ENCODE measurements at regions of chr5 and their contacts with region 1.

Region 1: DNA sequence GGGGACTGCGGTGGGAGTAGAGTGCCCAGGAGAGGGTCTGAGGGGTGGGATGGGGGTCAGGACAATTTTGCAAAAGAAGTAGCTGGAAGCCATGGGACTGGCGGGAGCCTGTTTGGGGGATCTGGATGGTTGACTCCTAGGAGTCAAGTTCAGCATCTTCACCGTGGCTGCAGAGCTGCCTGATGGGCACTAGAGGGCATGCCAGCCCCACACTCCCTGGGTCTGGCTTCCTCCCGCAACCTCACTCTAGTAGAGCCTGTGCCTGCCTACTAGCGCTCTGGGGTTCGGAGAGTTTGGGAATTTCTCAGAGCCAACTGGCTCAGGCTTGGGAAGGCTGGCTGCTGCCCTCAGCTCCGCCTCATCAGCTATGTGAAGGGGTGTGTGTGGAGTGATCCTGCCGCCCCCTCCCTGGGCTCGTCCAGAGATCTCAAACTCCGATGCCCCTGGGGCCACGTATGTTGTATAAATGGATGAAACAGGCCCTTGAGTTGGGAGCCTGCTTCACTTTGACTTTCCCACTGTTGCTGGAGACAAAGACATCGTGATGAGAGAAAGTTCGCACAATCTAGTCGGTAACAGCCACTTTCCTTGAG is 10.8 kb downstream of the TSPAN17 start:
- DNase-seq: peak; percentile 56 to 87 (median 81)
- H3K4me3 ChIP-seq: no peak overlapping the region
- H3K27ac ChIP-seq: peak overlapping the region in 37 of 59 donors; percentile 7 to 92 (median 64)
- H3K27me3 ChIP-seq: no peaks in the 10 kb centered on the region
- CTCF ChIP-seq: peak; percentile 50 to 92 (median 85)

Region 2: DNA sequence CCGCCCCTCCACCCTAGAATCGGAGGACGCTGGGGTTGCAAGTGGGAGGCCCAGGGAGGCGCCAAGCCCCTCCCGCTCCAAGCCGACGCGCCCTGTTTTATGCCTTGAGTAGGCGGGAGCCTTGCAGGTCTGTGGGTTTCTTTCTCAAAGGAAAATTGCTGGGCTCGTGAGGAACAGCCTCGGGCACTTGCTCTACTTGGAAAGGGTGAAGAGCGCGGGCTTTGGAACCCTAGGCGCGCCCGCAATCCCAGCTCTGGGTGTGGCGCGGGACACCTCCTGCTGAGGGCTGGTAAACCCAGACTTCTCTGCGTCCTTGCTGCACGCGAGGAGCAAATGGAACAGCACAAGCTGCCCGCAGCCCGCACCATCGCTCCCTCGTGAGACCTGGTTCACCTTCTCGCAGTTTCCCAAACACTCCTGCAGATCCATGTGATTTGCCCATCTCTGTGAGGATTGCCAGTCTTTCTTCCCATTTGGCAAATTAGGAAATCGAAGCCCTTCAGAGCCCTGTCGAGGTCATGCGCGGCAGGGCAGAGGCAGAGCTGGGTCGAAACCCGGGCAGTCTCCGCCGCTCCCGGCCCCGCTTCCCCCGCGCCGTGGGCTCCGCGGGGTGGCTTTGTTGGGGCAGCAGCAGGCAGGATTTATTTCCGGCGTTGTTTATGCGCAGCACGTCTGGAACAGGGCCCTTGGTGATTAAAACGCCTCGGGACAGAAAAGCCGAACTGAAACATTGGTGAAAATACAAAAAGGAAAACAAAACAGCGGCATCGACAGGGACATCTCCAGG is 885.2 kb before region 1 on chr5:
- intact Hi-C with region 1: no loop called
- DNase-seq: peak in 1 of 10 donors; percentile 40
- H3K4me3 ChIP-seq: peak overlapping the region in 55 of 59 donors; percentile 10 to 56 (median 39)
- H3K27ac ChIP-seq: peak overlapping the region in 2 of 59 donors; percentile 27 to 54
- H3K27me3 ChIP-seq: peaks cover 0 to 33% (median 3%) of the 10 kb centered on the region in 45 donors
- CTCF ChIP-seq: no peak

Region 3: DNA sequence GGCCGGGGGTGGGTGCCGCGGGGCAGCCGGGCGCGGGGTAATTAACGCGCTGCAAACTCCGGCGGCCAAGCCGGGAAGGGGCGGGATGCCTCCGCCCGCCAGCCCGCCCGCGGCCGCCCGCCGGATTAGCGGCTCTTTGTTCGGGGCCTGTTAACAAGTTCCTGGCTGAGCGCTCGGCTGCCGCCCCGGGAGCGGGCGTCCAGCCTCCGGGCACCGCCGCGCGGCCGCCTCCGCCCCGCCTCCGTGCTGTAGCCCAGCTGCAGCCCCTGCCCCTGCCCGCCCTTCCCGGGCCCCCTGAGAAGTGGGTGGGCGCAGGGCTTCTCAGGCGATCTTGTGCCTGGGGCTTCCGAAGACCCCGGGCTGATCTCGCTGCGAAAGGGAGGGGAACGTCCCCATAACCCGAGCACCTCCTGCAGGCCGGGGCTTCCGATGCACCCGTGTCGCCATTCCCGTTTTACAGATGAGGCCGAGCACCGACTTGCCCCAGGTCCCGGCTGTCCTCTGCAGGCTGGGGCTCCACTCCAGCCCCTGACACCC is 159.8 kb after region 1 on chr5:
- intact Hi-C with region 1: loop called in 1 of 2 experiments (anchors 10 kb)
- DNase-seq: peak in 3 of 10 donors; percentile 42 to 55 (median 45)
- H3K4me3 ChIP-seq: peak overlapping the region; percentile 24 to 71 (median 49)
- H3K27ac ChIP-seq: peak overlapping the region in 19 of 59 donors; percentile 7 to 71 (median 35)
- H3K27me3 ChIP-seq: peaks cover 0 to 33% (median 5%) of the 10 kb centered on the region in 45 donors
- CTCF ChIP-seq: peak in 1 of 56 donors; percentile 9

Region 4: DNA sequence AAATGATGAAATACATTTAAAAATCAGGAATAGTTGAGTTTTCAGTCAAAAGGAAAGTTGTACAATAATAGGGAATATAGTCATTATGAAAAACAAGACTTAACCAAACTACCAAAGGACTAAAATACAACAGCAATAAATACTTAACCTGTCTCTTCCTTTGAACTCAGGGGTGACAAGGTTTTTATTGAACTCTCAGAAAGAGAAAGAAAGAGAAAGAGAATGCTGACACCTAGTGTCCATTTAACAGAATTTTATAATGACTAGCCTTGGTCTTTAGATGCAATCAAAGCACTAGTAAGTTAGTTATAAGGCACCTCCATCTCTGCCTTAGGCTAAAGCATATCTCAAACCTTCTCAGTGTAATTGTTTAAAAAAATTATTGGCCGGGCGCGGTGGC is 300.9 kb after region 1 on chr5:
- intact Hi-C with region 1: loop called (anchors 2 to 10 kb)
- DNase-seq: no peak
- H3K4me3 ChIP-seq: no peak overlapping the region
- H3K27ac ChIP-seq: no peak overlapping the region
- H3K27me3 ChIP-seq: no peaks in the 10 kb centered on the region
- CTCF ChIP-seq: peak; percentile 15 to 77 (median 58)

Region 5: DNA sequence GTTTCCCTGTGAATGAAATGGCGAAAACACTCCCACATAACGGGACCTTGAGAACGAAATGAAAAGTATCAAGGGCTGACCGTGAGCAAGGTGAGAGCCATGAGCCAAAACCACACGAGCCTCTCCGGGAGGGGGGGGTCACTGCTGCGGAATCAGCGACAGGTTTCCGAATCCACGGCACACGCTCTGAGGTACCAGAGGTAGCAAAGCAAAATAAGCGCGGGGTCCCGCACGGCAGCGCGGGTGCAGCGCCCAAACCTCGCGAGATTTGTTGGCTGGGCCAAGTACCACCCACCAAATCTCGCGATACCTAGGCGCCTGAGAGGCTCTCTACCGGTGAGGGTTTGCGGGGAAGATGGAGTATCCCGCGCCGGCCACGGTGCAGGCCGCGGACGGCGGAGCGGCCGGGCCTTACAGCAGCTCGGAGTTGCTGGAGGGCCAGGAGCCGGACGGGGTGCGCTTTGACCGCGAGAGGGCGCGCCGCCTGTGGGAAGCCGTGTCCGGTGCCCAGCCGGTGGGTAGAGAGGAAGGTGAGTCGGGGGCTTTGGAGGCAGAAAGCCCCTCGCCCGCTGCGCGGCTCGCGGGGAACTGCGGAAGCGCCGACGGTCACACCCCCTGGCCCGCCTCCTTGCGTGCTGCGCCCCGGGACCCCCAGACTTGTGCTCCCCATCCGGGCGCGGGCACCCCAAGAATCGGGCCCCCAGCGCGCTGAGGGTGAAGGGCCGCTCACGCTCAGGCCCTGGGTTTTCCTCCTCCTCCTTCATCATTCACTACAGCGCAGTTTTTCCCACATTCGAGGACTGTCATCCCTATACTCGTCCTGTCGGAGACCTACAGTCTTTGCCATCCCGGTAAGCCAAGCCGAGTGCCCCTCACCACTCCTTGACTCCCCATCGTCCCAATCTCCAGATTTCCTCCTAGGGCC is 364.5 kb after region 1 on chr5 and contains the start of gene ZNF346:
- intact Hi-C with region 1: loop called in 1 of 2 experiments (anchors 5 kb)
- DNase-seq: peak; percentile 71 to 95 (median 89)
- H3K4me3 ChIP-seq: peak within 1 kb of the TSS; percentile 63 to 100 (median 88)
- H3K27ac ChIP-seq: peak within 1 kb of the TSS; percentile 24 to 95 (median 86)
- H3K27me3 ChIP-seq: no peaks in the 10 kb centered on the region
- CTCF ChIP-seq: peak in 54 of 56 donors; percentile 39 to 85 (median 60)
- total RNA-seq, gene ZNF346: 28.1 to 67.6 (median 44.9) TPM

Region 6: DNA sequence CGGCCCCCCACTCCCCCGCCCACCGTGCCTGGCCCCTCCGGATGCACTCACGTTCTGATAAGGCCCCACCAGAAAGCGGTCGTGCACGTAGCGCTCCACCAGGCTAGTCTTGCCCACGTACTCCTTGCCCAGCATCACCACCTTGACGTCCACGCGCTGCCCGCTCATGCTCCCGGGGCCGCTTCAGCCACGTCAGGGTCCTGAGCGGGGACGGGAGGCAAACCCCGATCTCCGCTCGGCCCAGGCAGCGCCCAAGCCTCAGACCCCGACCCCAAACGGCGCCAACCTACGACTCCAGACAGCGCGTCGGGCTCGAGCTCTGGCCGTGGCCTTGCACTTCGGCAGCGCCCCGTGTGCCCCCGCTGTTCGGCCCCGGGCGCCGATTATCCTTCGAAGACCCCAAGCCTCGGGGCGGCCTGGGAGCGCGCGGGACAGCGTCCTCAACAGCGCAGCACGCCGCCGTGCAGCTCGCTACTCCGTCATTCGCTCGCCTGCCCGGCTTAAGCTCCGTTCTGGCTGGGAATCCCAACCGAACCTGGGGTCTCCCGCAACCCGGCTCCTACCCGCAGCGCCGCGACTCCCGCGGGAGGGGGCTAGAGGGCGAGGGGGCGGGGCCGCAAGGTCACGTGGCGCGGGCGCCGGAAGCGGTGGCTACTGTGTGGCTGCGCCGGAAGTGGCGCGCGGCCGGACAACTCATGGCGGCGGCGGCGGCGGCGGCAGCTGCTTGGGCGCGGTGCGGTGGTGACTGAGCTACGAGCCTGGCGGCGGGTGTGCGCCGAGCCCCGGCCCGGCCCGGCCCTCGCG is 645.2 kb after region 1 on chr5 and contains the starts of genes PRELID1 and RAB24:
- intact Hi-C with region 1: loop called in 1 of 2 experiments (anchors 10 kb)
- DNase-seq: peak; percentile 83 to 96 (median 90)
- H3K4me3 ChIP-seq: peak within 1 kb of the TSS; percentile 77 to 100 (median 98)
- H3K27ac ChIP-seq: peak within 1 kb of the TSS in 57 of 59 donors; percentile 28 to 93 (median 79)
- H3K27me3 ChIP-seq: no peaks in the 10 kb centered on the region
- CTCF ChIP-seq: peak in 54 of 56 donors; percentile 15 to 70 (median 50)
- total RNA-seq, gene PRELID1: 46.3 to 88.8 (median 64.7) TPM
- total RNA-seq, gene RAB24: 24.3 to 74.5 (median 50.3) TPM

Measured in dorsolateral prefrontal cortex (tissue), 120 donors.